GM12878 (cell line): ENCODE measurements at regions of chr12 and their contacts with region 1.

Region 1: GRCh38 chr12:56636675-56637540 is 6.8 kb upstream of the BAZ2A start:
- DNase-seq: peak; percentile 87
- ATAC-seq: peak; percentile 69
- H3K4me3 ChIP-seq: peak overlapping the region; percentile 91
- H3K27ac ChIP-seq: peak overlapping the region; percentile 87
- H3K4me1 ChIP-seq: peaks cover 21% of the 10 kb centered on the region
- H3K27me3 ChIP-seq: no peaks in the 10 kb centered on the region
- CTCF ChIP-seq: peak; percentile 72 to 89 (median 81)
- EP300 ChIP-seq: 0 out of 4 replicates have a peak, but pooled peaks of 1 of the 2 experiments have one; percentile 22
- POLR2A ChIP-seq: no peak
- RAD21 ChIP-seq: peak; percentile 72

Region 2: DNA sequence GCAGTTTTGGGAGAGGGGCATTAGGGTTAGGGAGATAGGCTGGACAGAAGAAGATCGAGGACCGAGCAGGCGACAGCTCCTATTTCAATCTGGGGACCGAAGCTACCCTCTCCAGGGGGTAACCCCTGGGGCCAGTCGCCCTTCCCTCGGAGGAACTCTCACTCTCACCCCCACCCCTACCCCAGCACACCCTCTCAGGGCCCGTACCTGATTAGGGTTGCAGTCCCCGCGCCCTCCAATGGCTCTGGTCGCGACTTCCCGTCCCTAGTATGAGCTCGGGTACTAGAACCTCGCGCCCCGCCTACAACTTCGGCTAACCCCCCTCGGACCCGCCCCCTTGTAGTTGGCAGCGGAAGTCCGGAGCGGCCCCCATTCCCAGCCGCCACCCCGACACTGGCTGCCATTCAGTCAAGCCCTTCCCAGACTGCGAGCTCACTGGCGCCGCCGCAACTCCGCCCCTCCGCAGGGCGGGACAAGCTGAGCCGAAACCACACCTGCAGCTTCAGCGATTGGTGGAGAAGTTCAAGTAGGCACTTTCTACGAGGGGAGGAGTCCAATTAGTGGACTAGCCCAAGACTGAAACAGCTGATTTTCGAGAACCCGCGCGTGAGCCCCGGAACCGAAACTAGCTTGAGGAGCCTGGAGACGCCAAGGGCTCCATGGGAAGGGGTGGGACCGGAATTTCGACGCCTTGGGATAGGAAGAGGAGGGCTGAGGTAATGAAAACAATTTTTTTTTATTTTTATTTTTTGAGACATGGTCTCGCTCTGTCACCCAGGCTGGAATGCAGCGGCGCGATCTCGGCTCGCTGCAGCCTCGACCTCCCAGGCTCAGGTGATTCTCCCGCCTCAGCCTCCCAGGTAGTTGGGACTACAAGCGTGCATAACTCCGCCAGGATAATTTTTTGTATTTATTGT is 276.8 kb before region 1 on chr12 and contains the start of gene STAT2:
- CTCF ChIA-PET with region 1: interaction called, 3 read pairs
- POLR2A ChIA-PET with region 1: interaction called, 12 read pairs
- RAD21 ChIA-PET with region 1: interaction called, 12 read pairs
- SMC1A ChIA-PET with region 1: interaction called, 5 read pairs
- in situ Hi-C with region 1: no loop called
- intact Hi-C with region 1: no loop called
- DNase-seq: peak; percentile 99
- ATAC-seq: peak; percentile 98
- H3K4me3 ChIP-seq: peak within 1 kb of the TSS; percentile 93
- H3K27ac ChIP-seq: peak within 1 kb of the TSS; percentile 89
- H3K4me1 ChIP-seq: peaks cover 5% of the 10 kb centered on the region; the same call in 1 of the 2 replicates
- H3K27me3 ChIP-seq: no peaks in the 10 kb centered on the region
- CTCF ChIP-seq: no peak
- EP300 ChIP-seq: no peak
- POLR2A ChIP-seq: peak; percentile 90
- RAD21 ChIP-seq: no peak
- polyA plus RNA-seq, gene STAT2: 16.9 to 23.5 TPM

Region 3: GRCh38 chr12:56571126-56571525 is 65.8 kb before region 1 on chr12:
- CTCF ChIA-PET with region 1: interaction called, 16 read pairs
- POLR2A ChIA-PET with region 1: interaction called, 4 read pairs
- RAD21 ChIA-PET with region 1: interaction called, 4 read pairs
- SMC1A ChIA-PET with region 1: interaction called, 8 read pairs
- in situ Hi-C with region 1: no loop called
- intact Hi-C with region 1: no loop called
- DNase-seq: no peak
- ATAC-seq: no peak
- H3K4me3 ChIP-seq: no peak overlapping the region
- H3K27ac ChIP-seq: no peak overlapping the region
- H3K4me1 ChIP-seq: peaks cover 10% of the 10 kb centered on the region
- H3K27me3 ChIP-seq: no peaks in the 10 kb centered on the region
- CTCF ChIP-seq: no peak
- EP300 ChIP-seq: no peak
- POLR2A ChIP-seq: no peak
- RAD21 ChIP-seq: no peak

Region 4: GRCh38 chr12:56601503-56601902 is 35.4 kb before region 1 on chr12:
- CTCF ChIA-PET with region 1: interaction called, 50 read pairs
- POLR2A ChIA-PET with region 1: interaction called, 7 read pairs
- RAD21 ChIA-PET with region 1: interaction called, 21 read pairs
- SMC1A ChIA-PET with region 1: interaction called, 16 read pairs
- in situ Hi-C with region 1: no loop called
- intact Hi-C with region 1: no loop called
- DNase-seq: no peak
- ATAC-seq: peak; percentile 73
- H3K4me3 ChIP-seq: no peak overlapping the region
- H3K27ac ChIP-seq: no peak overlapping the region
- H3K4me1 ChIP-seq: no peaks in the 10 kb centered on the region; the same call in 1 of the 2 replicates
- H3K27me3 ChIP-seq: no peaks in the 10 kb centered on the region
- CTCF ChIP-seq: peak; percentile 36 to 46 (median 39); a peak in 4 of 6 replicates
- EP300 ChIP-seq: no peak
- POLR2A ChIP-seq: no peak
- RAD21 ChIP-seq: peak; percentile 37; the same call in 1 of the 2 replicates

Region 5: GRCh38 chr12:56657416-56658379 is 20.8 kb after region 1 on chr12:
- CTCF ChIA-PET with region 1: interaction called, 15 read pairs
- POLR2A ChIA-PET with region 1: interaction called, 38 read pairs
- RAD21 ChIA-PET with region 1: interaction called, 44 read pairs
- SMC1A ChIA-PET with region 1: interaction called, 21 read pairs
- in situ Hi-C with region 1: no loop called
- intact Hi-C with region 1: no loop called
- DNase-seq: no peak
- ATAC-seq: peak; percentile 78
- H3K4me3 ChIP-seq: no peak overlapping the region
- H3K27ac ChIP-seq: peak overlapping the region; percentile 69
- H3K4me1 ChIP-seq: peaks cover 15% of the 10 kb centered on the region
- H3K27me3 ChIP-seq: no peaks in the 10 kb centered on the region
- CTCF ChIP-seq: no peak
- EP300 ChIP-seq: no peak
- POLR2A ChIP-seq: no peak
- RAD21 ChIP-seq: no peak

Region 6: DNA sequence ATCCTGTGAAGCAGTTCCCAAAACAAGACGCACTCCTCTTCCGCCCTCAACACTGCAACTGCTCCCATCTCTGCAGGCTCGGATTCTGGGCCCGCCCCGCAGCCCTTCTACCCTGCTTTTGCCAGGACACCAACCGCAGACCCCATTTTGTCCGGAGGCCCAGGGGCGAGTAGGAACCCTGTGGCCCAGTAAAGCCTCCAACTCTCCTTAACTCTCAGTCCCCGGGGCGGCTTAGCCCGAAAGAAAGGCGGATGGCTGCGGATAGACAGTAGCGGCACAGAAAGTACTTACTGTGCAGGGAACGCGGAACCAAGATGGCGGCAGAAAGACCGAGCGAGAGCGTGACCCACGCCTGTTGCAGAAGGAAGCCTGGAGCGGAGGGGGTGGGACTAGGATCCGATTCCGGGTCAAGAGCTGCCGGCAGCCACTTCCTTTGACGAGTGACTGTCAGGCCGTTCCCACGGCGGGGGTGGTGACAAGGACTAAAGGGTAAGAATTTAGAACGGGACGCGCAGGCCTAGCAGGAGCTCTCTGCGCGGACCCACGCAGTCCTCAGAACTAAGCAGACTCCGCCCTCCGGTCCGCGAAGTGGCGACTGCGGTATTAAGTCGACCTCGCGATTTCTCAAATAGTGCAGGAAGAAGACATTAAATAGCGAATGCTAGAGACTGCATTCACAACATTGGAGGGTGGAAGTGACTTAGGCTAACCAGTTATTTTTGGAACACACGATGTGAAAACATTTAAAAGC is 88.2 kb after region 1 on chr12 and contains the start of gene NACA:
- CTCF ChIA-PET with region 1: interaction called, 14 read pairs
- POLR2A ChIA-PET with region 1: interaction called, 26 read pairs
- RAD21 ChIA-PET with region 1: interaction called, 11 read pairs
- SMC1A ChIA-PET with region 1: interaction called, 7 read pairs
- in situ Hi-C with region 1: no loop called
- intact Hi-C with region 1: loop called (anchors 2 kb)
- DNase-seq: peak; percentile 91
- ATAC-seq: peak; percentile 95
- H3K4me3 ChIP-seq: peak within 1 kb of the TSS; percentile 97
- H3K27ac ChIP-seq: peak within 1 kb of the TSS; percentile 93
- H3K4me1 ChIP-seq: peaks cover 28% of the 10 kb centered on the region
- H3K27me3 ChIP-seq: no peaks in the 10 kb centered on the region
- CTCF ChIP-seq: no peak
- EP300 ChIP-seq: no peak
- POLR2A ChIP-seq: peak; percentile 100
- RAD21 ChIP-seq: no peak
- polyA plus RNA-seq, gene NACA: 2,263 to 2,782 TPM